ENCODE measurements at regions of chr11 and their contacts with region 1.

Region 1: GRCh38 chr11:86608251-86608799 is 64.1 kb downstream of the ME3 start:
- DNase-seq: peak; percentile 57
- ATAC-seq: peak; percentile 76
- H3K4me3 Mint-ChIP-seq: no peak overlapping the region
- H3K27ac Mint-ChIP-seq: no peak overlapping the region
- H3K4me1 Mint-ChIP-seq: no peaks in the 10 kb centered on the region
- H3K27me3 Mint-ChIP-seq: peaks cover 11% of the 10 kb centered on the region

Region 2: GRCh38 chr11:86456052-86456939 is 152.0 kb before region 1 on chr11:
- CTCF ChIA-PET with region 1: interaction called, 45 read pairs
- POLR2A ChIA-PET with region 1: interaction called, 3 read pairs
- DNase-seq: peak; percentile 87
- ATAC-seq: peak; percentile 95
- H3K4me3 Mint-ChIP-seq: no peak overlapping the region
- H3K27ac Mint-ChIP-seq: no peak overlapping the region
- H3K4me1 Mint-ChIP-seq: peaks cover 3% of the 10 kb centered on the region
- H3K27me3 Mint-ChIP-seq: no peaks in the 10 kb centered on the region

Region 3: DNA sequence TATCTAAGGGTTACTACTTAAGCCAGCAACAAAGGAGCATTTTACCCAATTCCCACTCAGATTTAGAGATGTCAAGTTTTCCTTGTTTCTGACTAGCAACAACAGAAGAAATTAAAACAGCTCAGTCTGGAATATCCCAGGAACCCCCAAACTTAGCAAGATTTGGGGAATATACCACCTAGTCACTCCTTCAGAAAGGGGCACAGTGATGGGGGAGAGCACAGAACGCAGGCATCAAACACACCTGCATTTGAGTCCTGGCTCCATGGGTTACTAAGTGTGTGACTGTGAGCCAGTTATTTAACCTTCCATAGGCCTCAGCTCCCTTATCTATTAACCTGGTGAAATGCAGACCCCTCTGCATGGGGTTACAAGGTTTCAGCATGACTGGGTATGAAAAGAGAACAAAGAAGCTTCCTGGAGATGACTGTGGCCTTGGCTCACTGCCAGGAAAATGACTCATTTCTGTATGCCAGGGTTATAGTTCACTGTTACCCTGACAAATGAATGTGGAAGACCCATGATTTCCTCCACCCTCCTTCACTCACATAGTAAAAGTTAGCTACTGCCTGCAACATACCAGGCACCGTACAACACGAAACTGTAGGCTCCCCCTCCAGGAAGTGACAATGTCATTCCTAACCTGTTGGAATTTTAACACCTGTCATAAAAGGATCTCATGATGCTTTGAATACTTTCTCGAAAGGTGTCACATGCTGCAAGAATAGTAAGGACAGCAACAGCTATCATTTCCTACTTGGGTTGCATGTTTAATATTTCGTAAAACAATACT is 15.5 kb before region 1 on chr11:
- CTCF ChIA-PET with region 1: interaction called, 16 read pairs
- POLR2A ChIA-PET with region 1: no interaction called
- DNase-seq: peak; percentile 86
- ATAC-seq: peak; percentile 84
- H3K4me3 Mint-ChIP-seq: no peak overlapping the region
- H3K27ac Mint-ChIP-seq: no peak overlapping the region
- H3K4me1 Mint-ChIP-seq: peaks cover 20% of the 10 kb centered on the region
- H3K27me3 Mint-ChIP-seq: no peaks in the 10 kb centered on the region

Region 4: GRCh38 chr11:86678823-86679222 is 70.5 kb after region 1 on chr11:
- CTCF ChIA-PET with region 1: interaction called, 10 read pairs
- POLR2A ChIA-PET with region 1: no interaction called
- DNase-seq: no peak
- ATAC-seq: no peak
- H3K4me3 Mint-ChIP-seq: no peak overlapping the region
- H3K27ac Mint-ChIP-seq: no peak overlapping the region
- H3K4me1 Mint-ChIP-seq: no peaks in the 10 kb centered on the region
- H3K27me3 Mint-ChIP-seq: peaks cover 10% of the 10 kb centered on the region

Region 5: DNA sequence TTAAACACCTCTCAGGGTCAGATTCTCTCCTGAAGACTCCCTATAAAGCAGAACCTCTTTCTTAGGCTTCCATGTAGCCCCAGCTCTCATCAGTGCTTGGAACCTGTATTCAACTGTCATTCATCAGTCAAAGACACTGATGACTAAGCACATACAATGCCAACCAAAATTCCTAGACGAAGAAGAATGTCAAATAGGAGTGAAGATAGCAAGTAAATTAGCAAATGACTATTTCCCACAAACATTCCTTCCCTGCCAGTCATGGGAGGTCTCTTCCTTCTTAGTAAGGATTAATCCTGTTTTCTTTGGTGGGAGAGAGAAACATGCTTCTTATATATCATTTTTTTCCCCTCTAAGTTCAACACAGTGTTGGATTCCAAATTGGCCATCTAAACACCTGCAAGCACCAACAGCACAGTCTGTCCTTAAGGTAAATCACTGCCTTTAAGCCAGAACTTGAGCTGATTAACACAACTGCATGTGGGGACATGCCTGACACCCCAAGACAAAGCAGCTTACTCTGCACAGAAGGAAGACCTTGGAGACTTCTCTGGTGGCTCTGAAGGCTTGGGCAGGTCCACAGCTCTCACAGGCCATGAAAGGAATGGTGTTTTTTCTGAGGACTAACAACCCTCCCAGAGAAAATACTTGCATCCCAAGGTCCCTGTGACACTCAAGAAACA is 111.6 kb after region 1 on chr11:
- CTCF ChIA-PET with region 1: no interaction called
- POLR2A ChIA-PET with region 1: no interaction called
- DNase-seq: no peak
- ATAC-seq: no peak
- H3K4me3 Mint-ChIP-seq: no peak overlapping the region
- H3K27ac Mint-ChIP-seq: no peak overlapping the region
- H3K4me1 Mint-ChIP-seq: no peaks in the 10 kb centered on the region
- H3K27me3 Mint-ChIP-seq: peaks cover 4% of the 10 kb centered on the region

Region 6: GRCh38 chr11:86818466-86819192 is 210.3 kb after region 1 on chr11:
- CTCF ChIA-PET with region 1: interaction called, 15 read pairs
- POLR2A ChIA-PET with region 1: no interaction called
- DNase-seq: no peak
- ATAC-seq: no peak
- H3K4me3 Mint-ChIP-seq: no peak overlapping the region
- H3K27ac Mint-ChIP-seq: no peak overlapping the region
- H3K4me1 Mint-ChIP-seq: no peaks in the 10 kb centered on the region
- H3K27me3 Mint-ChIP-seq: peaks cover 14% of the 10 kb centered on the region

Measured in activated CD8-positive, alpha-beta T cell treated with anti-CD3 and anti-CD28 coated beads, Interleukin-2, amount 10 ng/mL, durations not matched to agents 7 days and 5 days (primary cell).